A549 (cell line): ENCODE measurements at regions of chr17 and their contacts with region 1.

Region 1: DNA sequence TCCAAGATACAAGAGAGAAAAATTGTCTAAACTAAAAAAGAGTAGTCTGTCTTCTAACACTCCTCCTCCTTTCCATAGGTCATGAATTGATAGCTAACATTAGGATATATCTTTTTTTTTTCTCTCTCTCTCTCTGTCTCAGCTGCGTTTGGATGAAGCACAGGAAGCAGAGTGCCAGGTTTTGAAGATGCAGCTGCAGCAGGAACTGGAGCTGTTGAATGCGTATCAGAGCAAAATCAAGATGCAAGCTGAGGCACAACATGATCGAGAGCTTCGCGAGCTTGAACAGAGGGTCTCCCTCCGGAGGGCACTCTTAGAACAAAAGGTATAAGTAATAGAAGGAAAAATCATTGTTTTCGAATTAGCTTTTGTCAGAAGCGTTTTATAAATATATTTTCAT is 32.9 kb downstream of the ABHD15 start:
- DNase-seq: no peak
- ATAC-seq: no peak
- H3K4me3 ChIP-seq: no peak overlapping the region
- H3K27ac ChIP-seq: no peak overlapping the region
- H3K4me1 ChIP-seq: no peaks in the 10 kb centered on the region
- CTCF ChIP-seq: no peak
- EP300 ChIP-seq: no peak
- POLR2A ChIP-seq: no peak
- RAD21 ChIP-seq: no peak

Region 2: GRCh38 chr17:29376667-29377270 is 157.2 kb before region 1 on chr17:
- CTCF ChIA-PET with region 1: interaction called, 137 read pairs
- POLR2A ChIA-PET with region 1: no interaction called
- DNase-seq: peak; percentile 55 to 76
- ATAC-seq: peak; percentile 94 to 97
- H3K4me3 ChIP-seq: no peak overlapping the region
- H3K27ac ChIP-seq: peak overlapping the region in 1 of 2 experiments; percentile 77; a peak in 3 of 6 replicates
- H3K4me1 ChIP-seq: peaks cover 43% of the 10 kb centered on the region
- CTCF ChIP-seq: no peak
- EP300 ChIP-seq: no peak
- POLR2A ChIP-seq: no peak
- RAD21 ChIP-seq: no peak

Region 3: DNA sequence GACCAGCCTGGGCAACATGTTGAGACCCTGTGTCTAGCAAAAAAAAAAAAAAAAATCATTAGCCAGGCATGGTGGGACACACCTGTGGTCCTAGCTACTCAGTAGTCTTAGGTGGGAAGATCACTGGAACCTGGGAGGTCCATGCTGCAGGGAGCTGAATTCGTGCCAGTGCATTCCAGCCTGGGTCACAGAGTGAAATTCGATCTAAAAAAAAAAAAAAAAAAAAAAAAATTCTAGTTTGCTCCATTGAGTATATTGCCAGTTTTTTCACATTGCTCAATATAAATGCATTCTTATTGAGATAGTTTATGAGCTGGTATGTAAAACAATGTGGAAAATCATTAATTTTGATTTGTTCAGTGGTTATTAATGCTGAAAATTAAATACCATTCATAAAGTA is 19.2 kb before region 1 on chr17:
- CTCF ChIA-PET with region 1: interaction called, 13 read pairs
- POLR2A ChIA-PET with region 1: no interaction called
- DNase-seq: no peak
- ATAC-seq: no peak
- H3K4me3 ChIP-seq: no peak overlapping the region
- H3K27ac ChIP-seq: no peak overlapping the region
- H3K4me1 ChIP-seq: no peaks in the 10 kb centered on the region
- CTCF ChIP-seq: no peak
- EP300 ChIP-seq: no peak
- POLR2A ChIP-seq: no peak
- RAD21 ChIP-seq: no peak

Region 4: DNA sequence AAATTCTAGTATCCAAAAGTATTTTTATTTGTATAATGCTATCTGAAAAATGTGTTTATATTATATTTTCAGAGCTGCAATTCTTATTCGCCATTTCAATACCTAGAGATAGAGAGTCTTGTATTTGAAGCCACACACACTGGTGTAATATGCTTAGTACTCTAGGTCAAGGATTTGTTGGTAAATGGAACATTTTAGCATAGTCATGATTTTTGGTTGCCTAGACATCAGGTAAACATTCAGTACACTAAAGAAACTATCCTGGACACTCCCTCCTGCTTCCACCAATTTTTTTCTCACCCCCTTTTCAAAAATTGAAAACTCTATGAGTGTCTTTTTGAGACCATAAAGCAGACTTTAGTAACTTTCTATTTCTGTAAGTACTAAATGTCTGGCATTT is 12.1 kb after region 1 on chr17:
- CTCF ChIA-PET with region 1: interaction called, 15 read pairs
- POLR2A ChIA-PET with region 1: no interaction called
- DNase-seq: peak; percentile 34 to 67
- ATAC-seq: peak; percentile 59 to 80; a peak in 4 of 6 replicates
- H3K4me3 ChIP-seq: no peak overlapping the region
- H3K27ac ChIP-seq: no peak overlapping the region
- H3K4me1 ChIP-seq: peaks cover 29% of the 10 kb centered on the region
- CTCF ChIP-seq: no peak
- EP300 ChIP-seq: no peak
- POLR2A ChIP-seq: no peak
- RAD21 ChIP-seq: no peak

Region 5: DNA sequence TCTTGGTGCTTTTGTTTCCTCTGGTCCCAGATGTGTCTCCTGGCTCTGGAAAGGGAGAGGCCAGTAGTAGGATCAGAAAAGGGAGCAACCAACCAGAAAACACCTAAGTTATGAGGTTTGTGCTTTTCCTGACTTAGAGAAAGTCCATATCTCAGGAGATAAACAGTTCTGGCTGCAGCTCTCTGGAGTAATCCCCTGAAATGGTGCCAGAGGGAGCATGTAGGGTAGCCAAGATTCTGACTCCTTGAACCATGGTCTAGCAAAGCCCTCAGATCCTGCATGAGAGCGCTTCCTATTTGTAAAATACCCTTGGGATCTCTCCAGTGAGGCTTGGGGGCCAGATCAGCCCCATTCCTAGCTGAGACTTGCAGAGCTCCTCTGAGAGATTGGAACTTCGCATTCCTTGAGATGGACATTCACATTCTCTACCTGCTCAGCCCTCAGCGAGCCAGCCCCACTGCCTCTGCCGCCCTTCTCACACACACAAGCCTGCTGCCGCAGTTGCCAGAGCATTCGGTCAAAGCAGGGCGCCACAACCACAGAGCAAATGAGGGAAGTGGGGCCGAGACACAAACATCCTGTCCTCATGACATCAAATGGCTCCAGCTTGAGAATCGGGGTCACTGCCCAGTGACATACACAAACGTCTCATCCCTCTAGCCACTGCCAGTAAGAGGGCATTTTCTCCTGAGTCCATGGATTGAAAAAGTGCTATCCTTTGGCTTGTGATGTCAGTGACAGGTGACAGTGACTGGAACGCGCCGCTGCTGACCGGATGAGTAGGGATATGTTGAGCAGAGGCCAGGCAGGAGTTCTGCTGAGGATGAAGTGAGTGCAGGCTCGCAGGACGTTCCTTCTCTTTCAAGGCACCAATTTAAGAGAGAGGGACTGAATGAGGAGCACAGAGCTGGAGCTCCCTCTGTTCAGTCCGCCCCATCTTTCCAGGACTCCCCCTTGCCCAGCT is 27.9 kb after region 1 on chr17:
- CTCF ChIA-PET with region 1: interaction called, 25 read pairs
- POLR2A ChIA-PET with region 1: interaction called, 4 read pairs
- DNase-seq: no peak
- ATAC-seq: no peak
- H3K4me3 ChIP-seq: no peak overlapping the region
- H3K27ac ChIP-seq: no peak overlapping the region
- H3K4me1 ChIP-seq: peaks cover 25% of the 10 kb centered on the region
- CTCF ChIP-seq: no peak
- EP300 ChIP-seq: no peak
- POLR2A ChIP-seq: no peak
- RAD21 ChIP-seq: no peak